ENCODE measurements at regions of chr4 and their contacts with region 1.

Region 1: GRCh38 chr4:15231265-15232091 is 196.4 kb upstream of the C1QTNF7 start:
- DNase-seq: peak; percentile 88
- ATAC-seq: peak; percentile 78
- H3K4me3 ChIP-seq: no peak overlapping the region
- H3K27ac ChIP-seq: peak overlapping the region; percentile 31; the same call in 1 of the 2 replicates
- H3K4me1 ChIP-seq: peaks cover 27% of the 10 kb centered on the region
- H3K27me3 ChIP-seq: peaks cover 3% of the 10 kb centered on the region; the same call in 1 of the 2 replicates
- CTCF ChIP-seq: peak; percentile 88
- POLR2A ChIP-seq: no peak
- RAD21 ChIP-seq: peak; percentile 83

Region 2: GRCh38 chr4:14816623-14817261 is 414.7 kb before region 1 on chr4:
- CTCF ChIA-PET with region 1: no interaction called
- POLR2A ChIA-PET with region 1: no interaction called
- dilution Hi-C with region 1: no loop called
- in situ Hi-C with region 1: no loop called
- intact Hi-C with region 1: no loop called
- DNase-seq: no peak
- ATAC-seq: no peak
- H3K4me3 ChIP-seq: no peak overlapping the region
- H3K27ac ChIP-seq: no peak overlapping the region
- H3K4me1 ChIP-seq: no peaks in the 10 kb centered on the region
- H3K27me3 ChIP-seq: no peaks in the 10 kb centered on the region
- CTCF ChIP-seq: no peak
- POLR2A ChIP-seq: no peak
- RAD21 ChIP-seq: no peak

Region 3: GRCh38 chr4:14888790-14889572 is 342.5 kb before region 1 on chr4:
- CTCF ChIA-PET with region 1: no interaction called
- POLR2A ChIA-PET with region 1: no interaction called
- dilution Hi-C with region 1: no loop called
- in situ Hi-C with region 1: no loop called
- intact Hi-C with region 1: no loop called
- DNase-seq: no peak
- ATAC-seq: no peak
- H3K4me3 ChIP-seq: no peak overlapping the region
- H3K27ac ChIP-seq: no peak overlapping the region
- H3K4me1 ChIP-seq: no peaks in the 10 kb centered on the region
- H3K27me3 ChIP-seq: no peaks in the 10 kb centered on the region
- CTCF ChIP-seq: no peak
- POLR2A ChIP-seq: no peak
- RAD21 ChIP-seq: no peak

Region 4: GRCh38 chr4:15010038-15010585 is 221.4 kb before region 1 on chr4:
- CTCF ChIA-PET with region 1: no interaction called
- POLR2A ChIA-PET with region 1: no interaction called
- dilution Hi-C with region 1: no loop called
- in situ Hi-C with region 1: no loop called
- intact Hi-C with region 1: no loop called
- DNase-seq: no peak
- ATAC-seq: no peak
- H3K4me3 ChIP-seq: no peak overlapping the region
- H3K27ac ChIP-seq: no peak overlapping the region
- H3K4me1 ChIP-seq: peaks cover 2% of the 10 kb centered on the region; the same call in 1 of the 2 replicates
- H3K27me3 ChIP-seq: no peaks in the 10 kb centered on the region
- CTCF ChIP-seq: no peak
- POLR2A ChIP-seq: no peak
- RAD21 ChIP-seq: no peak

Region 5: DNA sequence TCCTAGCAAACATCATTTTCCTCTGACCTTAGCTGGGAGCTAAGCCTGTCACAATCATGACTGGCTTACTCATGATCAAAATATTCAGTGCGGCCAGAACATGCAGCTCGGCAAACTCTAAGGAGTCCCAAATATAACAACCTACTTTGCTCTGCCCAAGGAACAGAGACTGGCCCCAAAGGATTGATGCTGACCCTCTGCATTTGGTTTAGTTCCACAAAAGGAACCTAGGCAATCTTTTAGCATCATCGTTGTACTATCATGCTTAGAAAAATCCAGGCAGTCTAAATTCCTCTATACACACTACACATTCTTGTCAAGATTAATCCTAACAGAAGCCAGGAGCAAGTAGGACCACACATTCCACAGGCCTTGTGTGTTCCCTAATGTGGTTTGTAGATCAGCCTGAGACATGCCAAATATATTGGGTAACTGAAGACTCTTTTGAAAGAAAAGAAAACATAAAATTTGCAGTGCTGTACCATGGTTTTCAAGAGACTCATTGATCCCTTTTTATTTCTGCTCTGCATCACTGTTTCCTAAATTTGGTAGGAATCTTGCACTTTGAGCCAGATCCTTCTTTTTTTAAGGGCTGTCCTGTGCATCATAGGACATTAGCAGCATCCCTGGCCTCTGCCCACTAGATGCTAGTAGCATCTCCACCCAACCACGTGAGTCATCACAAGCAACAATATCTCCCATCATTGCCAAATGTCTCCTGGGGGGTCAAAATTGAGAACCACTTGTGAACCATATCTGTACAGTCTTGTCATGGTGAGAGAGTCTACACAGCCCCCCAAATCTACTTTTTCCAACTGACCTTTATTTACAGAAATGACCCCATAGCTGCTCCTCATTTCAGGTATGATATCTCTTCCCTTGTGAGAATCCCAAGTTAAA is 220.6 kb after region 1 on chr4:
- CTCF ChIA-PET with region 1: interaction called, 14 read pairs
- POLR2A ChIA-PET with region 1: no interaction called
- dilution Hi-C with region 1: no loop called
- in situ Hi-C with region 1: loop called (anchors 5 kb)
- intact Hi-C with region 1: loop called (anchors 1 kb)
- DNase-seq: peak; percentile 98
- ATAC-seq: peak; percentile 89
- H3K4me3 ChIP-seq: no peak overlapping the region
- H3K27ac ChIP-seq: peak overlapping the region; percentile 90
- H3K4me1 ChIP-seq: peaks cover 28% of the 10 kb centered on the region
- H3K27me3 ChIP-seq: no peaks in the 10 kb centered on the region
- CTCF ChIP-seq: no peak
- POLR2A ChIP-seq: no peak
- RAD21 ChIP-seq: no peak

Region 6: GRCh38 chr4:15754323-15754722 is 522.8 kb after region 1 on chr4:
- CTCF ChIA-PET with region 1: no interaction called
- POLR2A ChIA-PET with region 1: no interaction called
- dilution Hi-C with region 1: no loop called
- in situ Hi-C with region 1: no loop called
- intact Hi-C with region 1: no loop called
- DNase-seq: peak; percentile 77
- ATAC-seq: no peak; the same call in none of the 2 replicates
- H3K4me3 ChIP-seq: no peak overlapping the region
- H3K27ac ChIP-seq: no peak overlapping the region
- H3K4me1 ChIP-seq: no peaks in the 10 kb centered on the region; the same call in 1 of the 2 replicates
- H3K27me3 ChIP-seq: no peaks in the 10 kb centered on the region
- CTCF ChIP-seq: no peak
- POLR2A ChIP-seq: no peak
- RAD21 ChIP-seq: no peak